SK-N-SH (cell line): ENCODE measurements at regions of chr4 and their contacts with region 1.

Region 1: DNA sequence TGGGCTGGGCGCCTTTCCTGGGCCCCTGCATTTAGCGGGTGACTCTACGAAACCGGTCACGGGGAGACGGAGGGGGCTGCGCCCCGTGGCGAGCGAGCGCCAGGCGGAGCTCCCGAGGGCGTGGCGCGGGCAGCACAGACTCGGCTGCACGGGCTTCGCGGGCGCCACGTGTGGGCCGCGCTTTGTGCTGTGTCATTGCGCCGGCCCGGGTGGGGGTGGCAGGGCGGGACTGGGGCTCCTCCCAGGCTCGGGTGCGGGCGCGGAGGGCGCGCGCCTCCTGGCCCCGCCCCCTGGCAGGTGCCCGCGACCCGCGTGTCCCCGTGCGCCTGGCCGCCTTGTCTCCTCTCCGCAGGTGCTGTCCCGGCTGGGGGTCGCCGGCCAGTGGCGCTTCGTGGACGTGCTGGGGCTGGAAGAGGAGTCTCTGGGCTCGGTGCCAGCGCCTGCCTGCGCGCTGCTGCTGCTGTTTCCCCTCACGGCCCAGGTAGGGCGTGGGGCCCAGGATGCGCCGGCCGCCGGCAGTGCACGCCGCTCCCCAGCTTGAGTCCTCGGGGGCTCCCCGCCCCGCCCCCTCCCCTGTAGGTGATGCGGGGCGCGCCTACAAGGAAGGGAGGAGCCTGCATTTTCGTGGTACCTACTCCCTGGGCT is 651 bp downstream of the UCHL1 start:
- DNase-seq: peak; percentile 85
- H3K4me3 ChIP-seq: peak overlapping the region; percentile 77 to 97
- H3K27ac ChIP-seq: peak overlapping the region; percentile 73 to 95; a peak in 3 of 4 replicates
- H3K4me1 ChIP-seq: peaks cover 10 to 16% of the 10 kb centered on the region in 2 experiments; a peak in 3 of 4 replicates
- H3K27me3 ChIP-seq: no peaks in the 10 kb centered on the region
- CTCF ChIP-seq: no peak
- EP300 ChIP-seq: no peak
- RAD21 ChIP-seq: no peak

Region 2: GRCh38 chr4:41143311-41144039 is 113.9 kb before region 1 on chr4:
- CTCF ChIA-PET with region 1: no interaction called
- POLR2A ChIA-PET with region 1: no interaction called
- DNase-seq: no peak
- H3K4me3 ChIP-seq: peak overlapping the region in 1 of 2 experiments; percentile 23; a peak in 2 of 4 replicates
- H3K27ac ChIP-seq: peak overlapping the region; percentile 88 to 97; a peak in 3 of 4 replicates
- H3K4me1 ChIP-seq: peaks cover 12 to 43% of the 10 kb centered on the region in 2 experiments
- H3K27me3 ChIP-seq: no peaks in the 10 kb centered on the region
- CTCF ChIP-seq: no peak
- EP300 ChIP-seq: peak in 1 of 2 experiments; percentile 56; a peak in 1 of 4 replicates
- RAD21 ChIP-seq: no peak

Region 3: DNA sequence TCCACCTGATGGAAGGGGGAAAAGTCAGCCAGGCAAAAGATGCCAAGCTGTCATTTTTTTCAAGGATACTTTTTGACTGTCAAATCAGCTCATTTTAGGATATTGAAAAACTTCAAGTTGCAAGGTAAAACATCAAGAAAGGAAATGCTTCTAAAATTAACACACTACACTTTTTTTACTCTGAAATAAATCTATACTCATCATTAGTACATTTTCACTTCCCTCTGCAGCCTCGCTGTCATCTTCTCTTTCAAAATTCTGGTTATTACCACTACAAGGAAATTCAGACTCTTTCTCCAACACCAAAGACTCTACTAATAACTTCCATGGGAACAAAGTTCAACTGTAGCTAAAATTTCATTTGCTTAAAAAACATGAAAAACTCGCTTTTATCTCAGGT is 84.6 kb before region 1 on chr4:
- CTCF ChIA-PET with region 1: no interaction called
- POLR2A ChIA-PET with region 1: no interaction called
- DNase-seq: no peak
- H3K4me3 ChIP-seq: no peak overlapping the region
- H3K27ac ChIP-seq: no peak overlapping the region
- H3K4me1 ChIP-seq: peaks cover 10 to 11% of the 10 kb centered on the region in 2 experiments
- H3K27me3 ChIP-seq: no peaks in the 10 kb centered on the region
- CTCF ChIP-seq: no peak
- EP300 ChIP-seq: no peak
- RAD21 ChIP-seq: no peak

Region 4: GRCh38 chr4:41214136-41214824 is 43.1 kb before region 1 on chr4 and contains the start of gene APBB2:
- CTCF ChIA-PET with region 1: interaction called, 15 read pairs
- POLR2A ChIA-PET with region 1: interaction called, 67 read pairs
- DNase-seq: peak; percentile 98
- H3K4me3 ChIP-seq: peak within 1 kb of the TSS; percentile 75 to 85
- H3K27ac ChIP-seq: peak within 1 kb of the TSS; percentile 71 to 93
- H3K4me1 ChIP-seq: peaks cover 4 to 21% of the 10 kb centered on the region in 2 experiments; a peak in 3 of 4 replicates
- H3K27me3 ChIP-seq: no peaks in the 10 kb centered on the region
- CTCF ChIP-seq: peak; percentile 74
- EP300 ChIP-seq: 0 out of 4 replicates have a peak, but pooled peaks of 1 of the 2 experiments have one; percentile 7
- RAD21 ChIP-seq: peak; percentile 72
- polyA plus RNA-seq, gene APBB2: 49.8 and 56.6 TPM in 2 replicates

Region 5: DNA sequence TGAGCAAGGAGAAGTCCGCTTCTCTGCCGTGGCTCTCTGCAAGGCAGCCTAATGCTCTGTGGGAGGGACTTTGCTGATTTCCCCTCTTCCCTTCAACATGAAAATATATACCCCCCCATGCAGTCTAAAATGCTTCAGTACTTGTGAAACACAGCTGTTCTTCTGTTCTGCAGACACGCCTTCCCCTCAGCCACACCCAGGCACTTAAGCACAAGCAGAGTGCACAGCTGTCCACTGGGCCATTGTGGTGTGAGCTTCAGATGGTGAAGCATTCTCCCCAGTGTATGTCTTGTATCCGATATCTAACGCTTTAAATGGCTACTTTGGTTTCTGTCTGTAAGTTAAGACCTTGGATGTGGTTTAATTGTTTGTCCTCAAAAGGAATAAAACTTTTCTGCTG is 10.6 kb after region 1 on chr4:
- CTCF ChIA-PET with region 1: interaction called, 3 read pairs
- POLR2A ChIA-PET with region 1: interaction called, 32 read pairs
- DNase-seq: no peak
- H3K4me3 ChIP-seq: no peak overlapping the region
- H3K27ac ChIP-seq: peak overlapping the region in 1 of 2 experiments; percentile 5; a peak in 1 of 4 replicates
- H3K4me1 ChIP-seq: no peaks in the 10 kb centered on the region
- H3K27me3 ChIP-seq: no peaks in the 10 kb centered on the region
- CTCF ChIP-seq: no peak
- EP300 ChIP-seq: no peak
- RAD21 ChIP-seq: no peak

Region 6: DNA sequence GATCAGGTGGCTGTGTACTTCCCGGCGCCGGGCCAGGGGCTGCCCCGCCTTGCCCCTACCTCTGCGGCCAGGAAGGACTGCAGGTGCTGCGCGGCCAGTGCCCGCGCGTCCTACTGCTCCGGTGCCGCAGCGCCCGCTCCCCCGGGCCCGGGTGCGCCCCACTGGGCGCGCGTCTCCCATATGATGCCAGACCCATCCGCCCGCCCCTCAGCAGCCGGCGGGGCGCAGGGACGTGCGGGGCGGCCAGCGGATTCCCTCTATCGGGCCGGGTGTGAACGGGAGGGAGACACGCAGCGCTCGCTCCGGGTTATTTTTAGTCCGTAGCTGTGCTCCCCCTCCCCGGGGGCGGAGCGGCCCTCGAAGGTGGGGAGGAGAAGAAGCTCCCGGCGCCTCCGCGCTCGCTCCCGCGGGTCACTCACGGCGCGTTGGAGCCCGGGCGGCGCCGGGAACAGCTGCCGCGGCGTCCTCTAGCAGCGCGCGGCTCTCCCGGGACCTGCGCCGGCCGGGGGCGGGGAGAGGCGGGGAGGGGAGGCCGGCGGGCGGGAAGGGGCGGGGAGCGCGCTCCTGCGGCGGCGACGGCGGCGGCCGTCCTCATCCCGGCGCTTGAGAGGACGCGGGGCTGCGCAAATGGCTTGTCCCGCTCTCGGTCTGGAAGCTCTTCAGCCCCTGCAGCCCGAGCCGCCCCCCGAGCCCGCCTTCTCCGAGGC is 103.0 kb after region 1 on chr4:
- CTCF ChIA-PET with region 1: interaction called, 12 read pairs
- POLR2A ChIA-PET with region 1: interaction called, 20 read pairs
- DNase-seq: peak; percentile 90
- H3K4me3 ChIP-seq: peak overlapping the region; percentile 62 to 65
- H3K27ac ChIP-seq: peak overlapping the region in 1 of 2 experiments; percentile 97; a peak in 2 of 4 replicates
- H3K4me1 ChIP-seq: peaks cover 0 to 39% of the 10 kb centered on the region in 2 experiments; a peak in 2 of 4 replicates
- H3K27me3 ChIP-seq: peaks cover 23% of the 10 kb centered on the region; the same call in 1 of the 2 replicates
- CTCF ChIP-seq: no peak
- EP300 ChIP-seq: no peak
- RAD21 ChIP-seq: no peak

Region 7: GRCh38 chr4:41538887-41539498 is 281.6 kb after region 1 on chr4:
- CTCF ChIA-PET with region 1: no interaction called
- POLR2A ChIA-PET with region 1: no interaction called
- DNase-seq: no peak
- H3K4me3 ChIP-seq: no peak overlapping the region
- H3K27ac ChIP-seq: no peak overlapping the region
- H3K4me1 ChIP-seq: peaks cover 0 to 3% of the 10 kb centered on the region in 2 experiments; a peak in 1 of 4 replicates
- H3K27me3 ChIP-seq: no peaks in the 10 kb centered on the region
- CTCF ChIP-seq: no peak
- EP300 ChIP-seq: no peak
- RAD21 ChIP-seq: no peak